K562 (cell line): ENCODE measurements at regions of chr2 and their contacts with region 1.

Region 1: DNA sequence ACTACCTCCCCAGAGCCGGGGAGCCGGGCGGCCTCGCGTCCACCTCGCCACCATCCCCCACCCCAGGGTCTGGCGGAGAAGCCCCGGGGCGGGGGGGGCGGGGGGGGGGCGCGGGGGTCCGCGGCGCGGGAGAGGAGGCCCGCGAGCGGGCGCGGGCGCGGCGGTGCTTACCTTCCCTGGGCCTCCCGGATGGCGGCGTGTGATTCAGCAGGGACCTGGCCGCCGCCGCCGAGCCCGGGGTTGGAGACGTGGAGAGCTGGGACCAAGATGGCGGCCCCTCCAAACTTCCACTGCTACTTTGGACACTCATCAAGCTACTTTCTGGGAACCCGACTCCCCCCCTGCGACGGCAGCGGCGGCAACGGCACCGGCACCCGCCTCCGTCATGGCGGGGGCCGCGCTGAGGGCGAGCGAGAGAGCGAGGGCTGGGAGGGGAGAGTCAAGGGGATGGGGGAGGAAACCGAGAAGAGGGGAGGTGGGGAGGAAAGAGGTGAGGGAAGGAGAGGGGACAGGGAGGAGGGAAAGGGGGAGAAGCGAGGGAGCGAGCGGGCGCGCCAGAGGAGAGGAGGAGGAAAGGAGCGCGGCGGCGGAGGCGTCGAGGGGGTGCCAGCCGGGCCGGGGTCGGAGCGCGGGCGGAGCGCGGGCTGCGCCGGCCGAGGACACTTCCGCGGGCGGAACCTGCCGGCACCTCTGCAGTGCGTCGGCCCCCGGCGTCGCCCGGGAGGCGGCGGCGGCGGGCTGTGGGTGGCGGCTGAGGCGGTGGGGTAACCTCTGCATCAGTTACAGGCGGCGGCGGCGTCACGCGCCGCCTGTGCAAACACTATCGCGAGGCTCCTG is at the start of gene TLK1:
- DNase-seq: peak; percentile 64 to 88 (median 80)
- ATAC-seq: peak; percentile 75
- H3K4me3 ChIP-seq: peak within 1 kb of the TSS; percentile 81
- H3K27ac ChIP-seq: peak within 1 kb of the TSS; percentile 92
- H3K4me1 ChIP-seq: peaks cover 10 to 39% of the 10 kb centered on the region in 2 experiments
- H3K27me3 ChIP-seq: no peaks in the 10 kb centered on the region
- CTCF ChIP-seq: peak in 2 of 3 experiments; percentile 39 to 41; a peak in 3 of 6 replicates
- EP300 ChIP-seq: no peak
- POLR2A ChIP-seq: peak; percentile 77
- RAD21 ChIP-seq: peak; percentile 22 to 29; a peak in 3 of 4 replicates
- polyA plus RNA-seq, gene TLK1: 40.5 to 92.0 TPM

Region 2: GRCh38 chr2:170973492-170974303 is 186.6 kb before region 1 on chr2:
- CTCF ChIA-PET with region 1: interaction called, 18 read pairs
- POLR2A ChIA-PET with region 1: interaction called, 4 read pairs
- in situ Hi-C with region 1: no loop called
- intact Hi-C with region 1: loop called (anchors 1 kb)
- DNase-seq: peak; percentile 96 to 99 (median 98)
- ATAC-seq: peak; percentile 92
- H3K4me3 ChIP-seq: peak overlapping the region; percentile 56
- H3K27ac ChIP-seq: peak overlapping the region; percentile 73
- H3K4me1 ChIP-seq: peaks cover 12 to 20% of the 10 kb centered on the region in 2 experiments; a peak in 4 of 5 replicates
- H3K27me3 ChIP-seq: no peaks in the 10 kb centered on the region
- CTCF ChIP-seq: peak; percentile 91 to 96 (median 93)
- EP300 ChIP-seq: peak; percentile 56
- POLR2A ChIP-seq: peak; percentile 77
- RAD21 ChIP-seq: peak; percentile 99 to 100

Region 3: GRCh38 chr2:171056307-171056706 is 104.0 kb before region 1 on chr2:
- CTCF ChIA-PET with region 1: no interaction called
- POLR2A ChIA-PET with region 1: no interaction called
- in situ Hi-C with region 1: no loop called
- intact Hi-C with region 1: no loop called
- DNase-seq: no peak
- ATAC-seq: no peak
- H3K4me3 ChIP-seq: no peak overlapping the region
- H3K27ac ChIP-seq: no peak overlapping the region
- H3K4me1 ChIP-seq: no peaks in the 10 kb centered on the region
- H3K27me3 ChIP-seq: no peaks in the 10 kb centered on the region
- CTCF ChIP-seq: no peak
- EP300 ChIP-seq: no peak
- POLR2A ChIP-seq: no peak
- RAD21 ChIP-seq: no peak

Region 4: GRCh38 chr2:171146633-171147032 is 13.7 kb before region 1 on chr2:
- CTCF ChIA-PET with region 1: no interaction called
- POLR2A ChIA-PET with region 1: interaction called, 58 read pairs
- in situ Hi-C with region 1: no loop called
- intact Hi-C with region 1: no loop called
- DNase-seq: no peak
- ATAC-seq: peak; percentile 8
- H3K4me3 ChIP-seq: no peak overlapping the region
- H3K27ac ChIP-seq: peak overlapping the region; percentile 47; the same call in 2 of the 3 replicates
- H3K4me1 ChIP-seq: peaks cover 9 to 25% of the 10 kb centered on the region in 2 experiments; a peak in 4 of 5 replicates
- H3K27me3 ChIP-seq: no peaks in the 10 kb centered on the region
- CTCF ChIP-seq: no peak
- EP300 ChIP-seq: no peak
- POLR2A ChIP-seq: no peak
- RAD21 ChIP-seq: no peak

Region 5: DNA sequence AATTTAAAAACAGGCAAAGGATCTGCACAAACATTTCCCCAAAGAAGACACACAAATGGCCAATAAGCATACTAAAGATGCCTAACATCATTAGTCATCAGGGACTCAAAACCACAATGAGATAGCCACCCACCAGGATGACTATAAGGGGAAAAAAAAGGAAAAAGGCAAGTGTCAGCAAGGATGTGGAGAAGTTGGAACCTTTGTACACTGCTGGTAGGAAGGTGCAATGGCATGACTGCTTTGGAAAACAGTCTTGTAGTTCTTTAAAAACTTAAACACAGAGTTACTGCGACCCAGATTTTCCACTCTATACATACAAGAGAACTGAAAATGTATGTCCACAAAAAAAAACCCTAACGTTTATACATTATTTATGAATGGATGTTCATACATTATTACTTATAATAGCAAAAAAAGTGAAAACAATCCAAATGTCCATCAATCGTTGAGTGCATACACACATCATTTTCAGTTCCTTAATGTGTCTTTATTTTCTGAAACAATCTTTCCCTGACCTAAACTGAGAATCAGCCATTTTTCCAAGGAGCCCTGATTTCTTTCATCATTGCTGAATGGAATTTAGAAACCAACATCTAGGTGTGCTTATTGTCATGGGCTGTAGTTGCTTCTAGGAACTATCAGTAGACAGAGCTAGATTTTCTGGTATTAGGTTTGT is 65.1 kb after region 1 on chr2:
- CTCF ChIA-PET with region 1: no interaction called
- POLR2A ChIA-PET with region 1: no interaction called
- in situ Hi-C with region 1: no loop called
- intact Hi-C with region 1: loop called (anchors 5 kb)
- DNase-seq: peak in 2 of 4 experiments; percentile 25 to 77
- ATAC-seq: peak; percentile 79
- H3K4me3 ChIP-seq: no peak overlapping the region
- H3K27ac ChIP-seq: no peak overlapping the region
- H3K4me1 ChIP-seq: peaks cover 0 to 6% of the 10 kb centered on the region in 2 experiments; a peak in 3 of 5 replicates
- H3K27me3 ChIP-seq: no peaks in the 10 kb centered on the region
- CTCF ChIP-seq: peak in 2 of 3 experiments; percentile 30 to 36; a peak in 2 of 6 replicates
- EP300 ChIP-seq: peak; percentile 79
- POLR2A ChIP-seq: no peak
- RAD21 ChIP-seq: peak in 1 of 2 experiments; percentile 36; a peak in 2 of 4 replicates

Region 6: DNA sequence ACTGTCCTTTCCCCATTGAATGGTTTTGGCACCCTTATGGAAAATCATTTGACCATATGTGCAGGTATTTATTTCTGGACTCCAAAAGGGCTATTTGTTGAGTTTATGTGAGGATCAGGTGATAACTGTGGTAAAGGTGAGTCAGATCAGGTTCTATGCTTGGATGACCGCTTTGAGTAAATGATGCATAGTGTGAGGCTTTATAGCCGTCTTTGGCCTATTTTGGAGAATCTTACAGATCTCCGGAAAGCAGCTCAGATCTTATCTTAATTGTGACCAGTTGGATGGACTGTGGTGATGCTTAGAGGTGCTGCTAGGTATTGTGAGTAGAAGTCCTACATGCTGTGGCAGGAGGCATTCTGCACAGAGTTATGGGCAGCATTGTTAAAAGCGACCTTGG is 147.2 kb after region 1 on chr2:
- CTCF ChIA-PET with region 1: no interaction called
- POLR2A ChIA-PET with region 1: no interaction called
- in situ Hi-C with region 1: no loop called
- intact Hi-C with region 1: no loop called
- DNase-seq: no peak
- ATAC-seq: no peak
- H3K4me3 ChIP-seq: no peak overlapping the region
- H3K27ac ChIP-seq: no peak overlapping the region
- H3K4me1 ChIP-seq: no peaks in the 10 kb centered on the region; a peak in 1 of 5 replicates
- H3K27me3 ChIP-seq: no peaks in the 10 kb centered on the region
- CTCF ChIP-seq: no peak
- EP300 ChIP-seq: no peak
- POLR2A ChIP-seq: no peak
- RAD21 ChIP-seq: no peak

Region 7: GRCh38 chr2:171416009-171416926 is 255.9 kb after region 1 on chr2:
- CTCF ChIA-PET with region 1: interaction called, 3 read pairs
- POLR2A ChIA-PET with region 1: interaction called, 4 read pairs
- in situ Hi-C with region 1: no loop called
- intact Hi-C with region 1: loop called (anchors 1 kb)
- DNase-seq: peak; percentile 44 to 90 (median 64)
- ATAC-seq: peak; percentile 99
- H3K4me3 ChIP-seq: no peak overlapping the region
- H3K27ac ChIP-seq: no peak overlapping the region
- H3K4me1 ChIP-seq: peaks cover 0 to 16% of the 10 kb centered on the region in 2 experiments; a peak in 3 of 5 replicates
- H3K27me3 ChIP-seq: no peaks in the 10 kb centered on the region
- CTCF ChIP-seq: peak; percentile 86 to 93 (median 92)
- EP300 ChIP-seq: 0 out of 2 replicates have a peak, but pooled peaks have one; percentile 17
- POLR2A ChIP-seq: no peak
- RAD21 ChIP-seq: peak; percentile 90 to 96

Region 8: GRCh38 chr2:171522052-171522787 is 361.9 kb after region 1 on chr2 and contains the start of gene CYBRD1:
- CTCF ChIA-PET with region 1: no interaction called
- POLR2A ChIA-PET with region 1: no interaction called
- in situ Hi-C with region 1: no loop called
- intact Hi-C with region 1: loop called (anchors 5 kb)
- DNase-seq: peak; percentile 92 to 96 (median 92)
- ATAC-seq: peak; percentile 84
- H3K4me3 ChIP-seq: peak within 1 kb of the TSS; percentile 82
- H3K27ac ChIP-seq: peak within 1 kb of the TSS; percentile 92
- H3K4me1 ChIP-seq: peaks cover 17 to 19% of the 10 kb centered on the region in 2 experiments
- H3K27me3 ChIP-seq: no peaks in the 10 kb centered on the region
- CTCF ChIP-seq: peak; percentile 14 to 36 (median 15); a peak in 4 of 6 replicates
- EP300 ChIP-seq: no peak; the same call in 1 of the 2 replicates
- POLR2A ChIP-seq: peak; percentile 89
- RAD21 ChIP-seq: peak; percentile 20 to 25; a peak in 3 of 4 replicates
- polyA plus RNA-seq, gene CYBRD1: 9.6 to 10.7 TPM